PC-3 (cell line): ENCODE measurements at regions of chr9 and their contacts with region 1.

Region 1: GRCh38 chr9:105341434-105342144 is 97.1 kb downstream of the SLC44A1 start:
- DNase-seq: no peak
- ATAC-seq: no peak
- H3K4me3 ChIP-seq: no peak overlapping the region
- H3K27ac ChIP-seq: no peak overlapping the region
- H3K4me1 ChIP-seq: no peaks in the 10 kb centered on the region
- H3K27me3 ChIP-seq: no peaks in the 10 kb centered on the region
- CTCF ChIP-seq: no peak

Region 2: GRCh38 chr9:105425841-105426436 is 84.3 kb after region 1 on chr9:
- CTCF ChIA-PET with region 1: no interaction called
- POLR2A ChIA-PET with region 1: no interaction called
- intact Hi-C with region 1: no loop called
- DNase-seq: peak; percentile 50
- ATAC-seq: peak; percentile 71
- H3K4me3 ChIP-seq: no peak overlapping the region
- H3K27ac ChIP-seq: no peak overlapping the region
- H3K4me1 ChIP-seq: no peaks in the 10 kb centered on the region
- H3K27me3 ChIP-seq: no peaks in the 10 kb centered on the region
- CTCF ChIP-seq: peak; percentile 63

Region 3: GRCh38 chr9:105483618-105484017 is 142.0 kb after region 1 on chr9:
- CTCF ChIA-PET with region 1: no interaction called
- POLR2A ChIA-PET with region 1: interaction called, 19 read pairs
- intact Hi-C with region 1: no loop called
- DNase-seq: no peak
- ATAC-seq: no peak
- H3K4me3 ChIP-seq: no peak overlapping the region
- H3K27ac ChIP-seq: no peak overlapping the region
- H3K4me1 ChIP-seq: no peaks in the 10 kb centered on the region
- H3K27me3 ChIP-seq: no peaks in the 10 kb centered on the region
- CTCF ChIP-seq: no peak

Region 4: GRCh38 chr9:105690747-105691146 is 349.2 kb after region 1 on chr9:
- CTCF ChIA-PET with region 1: no interaction called
- POLR2A ChIA-PET with region 1: no interaction called
- intact Hi-C with region 1: no loop called
- DNase-seq: peak; percentile 27
- ATAC-seq: no peak
- H3K4me3 ChIP-seq: no peak overlapping the region
- H3K27ac ChIP-seq: no peak overlapping the region
- H3K4me1 ChIP-seq: peaks cover 5% of the 10 kb centered on the region; the same call in 1 of the 2 replicates
- H3K27me3 ChIP-seq: no peaks in the 10 kb centered on the region
- CTCF ChIP-seq: peak; percentile 35